ENCODE measurements at regions of chr17 and their contacts with region 1.

Region 1: DNA sequence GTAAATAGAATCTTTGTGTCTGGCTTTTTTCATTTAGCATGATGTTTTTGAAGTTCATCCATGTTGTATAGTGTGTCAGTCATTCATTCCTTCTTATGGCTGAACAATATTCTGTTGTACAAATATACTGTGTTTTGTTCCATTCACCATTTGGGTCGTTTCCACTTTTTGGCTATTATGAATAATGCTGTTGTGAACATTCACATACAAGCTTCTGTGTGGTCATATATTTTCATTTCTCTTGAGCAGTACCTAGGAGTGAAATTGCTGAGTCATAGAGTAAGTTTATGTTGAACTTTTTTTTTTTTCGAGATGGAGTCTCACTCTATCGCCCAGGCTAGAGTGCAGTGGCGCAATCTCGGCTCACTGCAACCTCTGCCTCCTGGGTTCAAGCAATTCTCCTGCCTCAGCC is 32.3 kb upstream of the TAOK1 start:
- DNase-seq: no peak
- ATAC-seq: no peak
- H3K4me3 Mint-ChIP-seq: no peak overlapping the region
- H3K27ac Mint-ChIP-seq: no peak overlapping the region
- H3K4me1 Mint-ChIP-seq: peaks cover 2% of the 10 kb centered on the region
- H3K27me3 Mint-ChIP-seq: no peaks in the 10 kb centered on the region
- CTCF ChIP-seq: no peak

Region 2: DNA sequence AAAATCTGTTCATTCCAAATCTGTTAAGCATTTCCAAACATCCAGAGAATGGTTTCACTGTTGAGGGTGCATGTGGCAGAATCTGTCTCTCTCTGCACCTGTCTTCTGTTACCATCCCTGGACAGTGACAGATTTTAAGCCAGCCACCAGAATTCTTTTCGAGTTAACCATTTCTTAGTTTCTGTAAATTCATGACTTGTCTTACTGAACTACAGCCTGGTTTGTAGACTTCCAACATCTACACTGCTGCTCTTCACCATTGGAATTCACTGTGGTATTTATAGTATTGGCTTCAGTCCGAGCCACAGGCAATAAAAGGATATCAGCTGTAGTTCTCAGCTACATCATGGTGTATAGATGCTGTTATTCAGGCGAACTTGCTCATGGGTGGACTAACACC is 1167.0 kb after region 1 on chr17:
- CTCF ChIA-PET with region 1: no interaction called
- POLR2A ChIA-PET with region 1: interaction called, 12 read pairs
- intact Hi-C with region 1: no loop called
- DNase-seq: no peak
- ATAC-seq: no peak
- H3K4me3 Mint-ChIP-seq: no peak overlapping the region
- H3K27ac Mint-ChIP-seq: no peak overlapping the region
- H3K4me1 Mint-ChIP-seq: no peaks in the 10 kb centered on the region
- H3K27me3 Mint-ChIP-seq: no peaks in the 10 kb centered on the region
- CTCF ChIP-seq: no peak